ENCODE measurements at regions of chr1 and their contacts with region 1.

Region 1: GRCh38 chr1:20633190-20634064 is at the start of gene PINK1:
- DNase-seq: peak; percentile 83 to 91 (median 84)
- ATAC-seq: peak; percentile 90 to 94 (median 92)
- H3K4me3 ChIP-seq: peak within 1 kb of the TSS; percentile 81 to 100 (median 97)
- H3K27ac ChIP-seq: peak within 1 kb of the TSS; percentile 89 to 100 (median 96)
- H3K4me1 ChIP-seq: peaks cover 0 to 31% (median 15%) of the 10 kb centered on the region in 12 donors
- H3K27me3 ChIP-seq: no peaks in the 10 kb centered on the region
- CTCF ChIP-seq: peak; percentile 97 to 100 (median 99)
- POLR2A ChIP-seq: peak; percentile 31 to 91
- total RNA-seq, gene PINK1: 147 to 418 (median 258) TPM

Region 2: GRCh38 chr1:20265250-20265649 is 368.2 kb before region 1 on chr1:
- intact Hi-C with region 1: no loop called
- DNase-seq: peak in 4 of 5 donors; percentile 35 to 82 (median 63)
- ATAC-seq: peak; percentile 93 to 97 (median 94)
- H3K4me3 ChIP-seq: no peak overlapping the region
- H3K27ac ChIP-seq: peak overlapping the region in 10 of 12 donors; percentile 9 to 81 (median 38)
- H3K4me1 ChIP-seq: peaks cover 0 to 16% (median 5%) of the 10 kb centered on the region in 12 donors
- H3K27me3 ChIP-seq: peaks cover 0 to 4% (median 0%) of the 10 kb centered on the region in 9 donors
- CTCF ChIP-seq: no peak
- POLR2A ChIP-seq: no peak

Region 3: GRCh38 chr1:20507564-20508410 is 125.6 kb before region 1 on chr1 and contains the start of gene MUL1:
- intact Hi-C with region 1: loop called in 1 of 10 experiments (anchors 5 kb)
- DNase-seq: peak; percentile 96 to 97 (median 97)
- ATAC-seq: peak; percentile 97 to 99 (median 98)
- H3K4me3 ChIP-seq: peak within 1 kb of the TSS; percentile 72 to 95 (median 84)
- H3K27ac ChIP-seq: peak within 1 kb of the TSS; percentile 72 to 93 (median 90)
- H3K4me1 ChIP-seq: peaks cover 0 to 45% (median 35%) of the 10 kb centered on the region in 12 donors
- H3K27me3 ChIP-seq: peaks cover 0 to 6% (median 0%) of the 10 kb centered on the region in 9 donors
- CTCF ChIP-seq: no peak
- POLR2A ChIP-seq: peak; percentile 25 to 77
- total RNA-seq, gene MUL1: 34.5 to 57.1 (median 41.2) TPM

Region 4: DNA sequence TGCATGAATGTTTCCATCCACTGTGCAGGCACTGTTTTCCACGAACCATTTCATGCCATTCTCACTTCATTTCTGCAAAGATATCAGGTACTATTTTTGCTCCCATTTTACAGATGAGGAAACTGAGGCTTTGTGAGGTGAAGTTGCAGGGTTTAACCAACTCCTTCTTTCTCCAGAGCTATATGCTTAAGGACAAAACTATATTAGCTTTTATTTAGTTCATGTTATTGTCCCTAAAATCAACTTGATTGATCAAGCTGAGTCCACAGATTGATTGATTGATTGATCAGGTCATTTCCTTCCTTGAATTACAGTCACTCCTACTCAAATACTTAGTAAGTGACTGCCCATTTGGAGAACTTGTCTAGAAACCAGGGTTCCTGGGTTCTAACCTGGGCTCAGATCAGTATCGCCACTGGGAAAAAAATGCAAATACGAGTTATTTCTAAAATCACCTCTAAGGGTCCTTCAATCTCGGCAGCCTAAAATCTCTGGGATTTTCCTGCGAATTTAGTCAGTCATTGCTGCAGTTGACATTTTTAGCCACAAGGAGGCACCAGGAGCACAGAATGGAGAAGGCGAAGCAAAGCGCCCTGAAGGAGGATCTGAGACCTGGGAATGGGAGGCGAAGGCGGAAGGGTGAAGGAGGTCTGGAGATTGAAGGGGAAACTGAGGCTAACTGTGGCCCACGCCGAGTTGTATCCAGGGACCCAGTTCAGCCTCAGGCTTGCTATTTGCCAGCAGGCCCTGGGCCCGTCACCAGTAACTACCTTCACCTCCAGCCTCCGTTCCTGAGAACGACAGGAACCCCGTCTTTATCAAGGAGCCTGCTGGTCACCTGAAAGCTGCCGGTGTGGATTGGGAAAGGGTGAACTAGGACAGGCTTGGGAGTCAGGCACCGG is 111.2 kb before region 1 on chr1:
- intact Hi-C with region 1: loop called in 8 of 10 experiments (anchors 2 to 5 kb)
- DNase-seq: peak; percentile 68 to 79 (median 70)
- ATAC-seq: peak; percentile 37 to 79 (median 75)
- H3K4me3 ChIP-seq: peak overlapping the region in 3 of 12 donors; percentile 24 to 33 (median 29)
- H3K27ac ChIP-seq: no peak overlapping the region
- H3K4me1 ChIP-seq: peaks cover 0 to 7% (median 0%) of the 10 kb centered on the region in 12 donors
- H3K27me3 ChIP-seq: no peaks in the 10 kb centered on the region
- CTCF ChIP-seq: peak; percentile 76 to 94 (median 90)
- POLR2A ChIP-seq: no peak

Region 5: DNA sequence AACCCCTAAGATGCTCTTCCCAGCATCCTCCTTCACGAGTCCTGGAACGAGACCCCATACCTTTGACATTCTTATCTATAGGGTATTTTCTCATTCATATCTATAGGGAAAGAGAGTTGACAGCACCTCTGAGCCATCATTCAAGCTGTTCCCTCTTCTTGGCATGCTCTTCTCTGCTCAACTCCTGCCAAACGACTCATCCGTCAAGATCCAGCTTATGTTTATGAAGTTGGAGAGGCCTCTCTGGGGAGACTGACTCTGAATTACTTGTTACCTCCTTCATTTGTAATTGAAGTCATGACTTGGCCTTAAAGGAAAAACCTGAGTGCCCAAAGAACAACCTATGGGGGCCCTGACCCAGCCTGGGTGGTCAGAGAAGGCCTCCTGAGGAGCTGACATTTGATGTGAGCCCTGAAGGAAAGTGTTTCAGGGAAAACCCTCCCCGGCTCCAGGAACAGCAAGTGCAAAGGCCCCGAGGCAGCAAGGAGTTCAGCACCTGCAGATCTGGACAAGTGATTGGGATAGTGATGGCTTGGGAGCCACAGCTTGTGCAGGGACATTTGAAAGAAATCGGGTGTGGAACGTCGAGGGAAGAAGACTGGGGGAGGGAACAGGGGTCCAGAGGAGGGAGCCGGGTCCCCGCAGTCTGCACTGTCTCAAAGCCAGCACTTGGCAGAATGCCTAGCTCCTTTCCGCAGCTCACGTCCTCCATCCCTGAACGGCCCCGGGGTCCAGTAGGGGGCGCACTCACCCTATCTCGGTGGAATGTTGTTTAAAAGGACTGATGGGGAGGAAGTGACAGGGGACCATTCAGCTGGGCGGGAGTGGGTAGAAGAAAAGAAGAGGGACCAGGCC is 58.5 kb before region 1 on chr1:
- intact Hi-C with region 1: loop called in 9 of 10 experiments (anchors 1 to 5 kb)
- DNase-seq: peak; percentile 84 to 93 (median 86)
- ATAC-seq: peak; percentile 88 to 98 (median 98)
- H3K4me3 ChIP-seq: no peak overlapping the region
- H3K27ac ChIP-seq: no peak overlapping the region
- H3K4me1 ChIP-seq: peaks cover 0 to 4% (median 0%) of the 10 kb centered on the region in 12 donors
- H3K27me3 ChIP-seq: peaks cover 0 to 3% (median 0%) of the 10 kb centered on the region in 9 donors
- CTCF ChIP-seq: peak; percentile 58 to 88 (median 73)
- POLR2A ChIP-seq: no peak

Region 6: DNA sequence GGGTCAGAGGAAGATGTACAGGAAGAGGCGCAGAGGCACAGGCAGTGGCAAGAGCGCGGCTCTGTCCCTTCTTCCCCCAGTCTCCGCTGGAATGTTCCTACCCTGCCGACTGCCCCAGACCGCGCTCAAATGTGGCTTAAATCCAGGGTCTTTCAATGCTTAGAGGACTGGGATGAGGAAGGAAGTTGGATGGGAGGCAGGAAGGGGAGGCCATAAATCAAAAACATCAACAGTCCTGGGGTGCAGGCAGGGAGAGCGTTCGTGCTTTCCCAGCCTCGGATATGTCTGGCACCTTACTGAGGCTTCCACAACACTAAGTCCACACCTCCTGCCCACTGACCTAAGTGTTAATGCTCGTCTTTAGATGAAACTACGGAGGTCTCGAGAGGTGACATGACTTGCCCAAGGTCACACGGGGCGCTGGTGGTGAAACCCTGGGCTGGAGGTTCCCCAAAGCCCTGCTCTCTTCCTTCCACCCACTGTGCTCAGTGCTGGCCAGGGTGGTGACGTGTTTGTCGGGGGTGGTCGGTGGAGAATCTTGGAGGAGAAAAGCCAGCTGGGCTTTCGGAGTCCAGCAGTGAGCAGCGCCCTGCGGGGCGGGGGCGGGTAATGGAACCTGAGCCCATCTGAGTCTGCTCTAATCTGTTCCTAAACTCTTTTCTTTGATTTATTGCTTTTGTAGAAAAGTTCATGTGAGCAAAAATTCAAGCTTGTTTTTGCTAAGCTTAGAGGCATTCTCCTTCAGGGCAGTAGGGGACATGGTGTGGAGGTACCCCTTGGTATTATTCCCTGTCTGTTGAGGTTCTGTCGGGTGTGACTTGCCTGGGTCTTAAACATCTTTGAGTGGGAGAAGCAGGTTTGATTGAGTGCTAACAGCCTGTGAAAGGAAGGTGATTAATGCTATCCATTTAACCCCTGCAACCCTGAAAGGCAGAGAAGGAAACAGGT is 43.8 kb before region 1 on chr1:
- intact Hi-C with region 1: loop called in 1 of 10 experiments (anchors 5 kb)
- DNase-seq: peak; percentile 59 to 79 (median 70)
- ATAC-seq: peak; percentile 69 to 87 (median 78)
- H3K4me3 ChIP-seq: peak overlapping the region in 10 of 12 donors; percentile 8 to 57 (median 39)
- H3K27ac ChIP-seq: peak overlapping the region; percentile 12 to 84 (median 63)
- H3K4me1 ChIP-seq: peaks cover 0 to 27% (median 10%) of the 10 kb centered on the region in 12 donors
- H3K27me3 ChIP-seq: peaks cover 0 to 41% (median 11%) of the 10 kb centered on the region in 9 donors
- CTCF ChIP-seq: no peak
- POLR2A ChIP-seq: peak in 1 of 2 donors; percentile 22

Region 7: GRCh38 chr1:20661207-20662109 is 28.0 kb after region 1 on chr1 and contains the start of gene DDOST:
- intact Hi-C with region 1: loop called in 1 of 10 experiments (anchors 1 kb)
- DNase-seq: peak; percentile 95 to 99 (median 97)
- ATAC-seq: peak; percentile 95 to 97 (median 96)
- H3K4me3 ChIP-seq: peak within 1 kb of the TSS; percentile 78 to 100 (median 88)
- H3K27ac ChIP-seq: peak within 1 kb of the TSS; percentile 41 to 97 (median 90)
- H3K4me1 ChIP-seq: peaks cover 4 to 52% (median 37%) of the 10 kb centered on the region in 12 donors
- H3K27me3 ChIP-seq: no peaks in the 10 kb centered on the region
- CTCF ChIP-seq: peak in 11 of 12 donors; percentile 18 to 74 (median 47)
- POLR2A ChIP-seq: peak in 1 of 2 donors; percentile 66
- total RNA-seq, gene DDOST: 110 to 175 (median 128) TPM

Measured in heart left ventricle (tissue), 16 donors.